Esophagus muscularis mucosa (tissue), 4 donors: ENCODE measurements at regions of chr1 and their contacts with region 1.

Region 1: GRCh38 chr1:24635195-24635843 is 7.8 kb upstream of the SRRM1 start:
- DNase-seq: no peak
- H3K4me3 ChIP-seq: no peak overlapping the region
- H3K27ac ChIP-seq: no peak overlapping the region
- H3K4me1 ChIP-seq: peaks cover 0 to 6% (median 1%) of the 10 kb centered on the region in 4 donors
- H3K27me3 ChIP-seq: peaks cover 0 to 10% (median 0%) of the 10 kb centered on the region in 4 donors
- CTCF ChIP-seq: peak; percentile 41 to 54 (median 45)
- EP300 ChIP-seq: no peak
- POLR2A ChIP-seq: no peak

Region 2: GRCh38 chr1:24201941-24202440 is 433.3 kb before region 1 on chr1:
- intact Hi-C with region 1: loop called (anchors 10 kb)
- DNase-seq: peak; percentile 97
- H3K4me3 ChIP-seq: no peak overlapping the region
- H3K27ac ChIP-seq: peak overlapping the region in 2 of 4 donors; percentile 10 to 52
- H3K4me1 ChIP-seq: peaks cover 3 to 9% (median 5%) of the 10 kb centered on the region in 4 donors
- H3K27me3 ChIP-seq: peaks cover 0 to 25% (median 0%) of the 10 kb centered on the region in 4 donors
- CTCF ChIP-seq: peak; percentile 71 to 74 (median 73)
- EP300 ChIP-seq: no peak
- POLR2A ChIP-seq: no peak

Region 3: GRCh38 chr1:24502709-24503058 is 132.6 kb before region 1 on chr1 and contains the start of gene RCAN3:
- intact Hi-C with region 1: loop called (anchors 10 kb)
- DNase-seq: no peak
- H3K4me3 ChIP-seq: peak within 1 kb of the TSS; percentile 62 to 91 (median 78)
- H3K27ac ChIP-seq: peak within 1 kb of the TSS; percentile 78 to 87 (median 82)
- H3K4me1 ChIP-seq: peaks cover 2 to 25% (median 18%) of the 10 kb centered on the region in 4 donors
- H3K27me3 ChIP-seq: no peaks in the 10 kb centered on the region
- CTCF ChIP-seq: no peak
- EP300 ChIP-seq: no peak
- POLR2A ChIP-seq: no peak
- total RNA-seq, gene RCAN3: 5.3 to 14.0 (median 9.3) TPM

Region 4: GRCh38 chr1:24609949-24610382 is 25.4 kb before region 1 on chr1:
- intact Hi-C with region 1: no loop called
- DNase-seq: no peak
- H3K4me3 ChIP-seq: no peak overlapping the region
- H3K27ac ChIP-seq: no peak overlapping the region
- H3K4me1 ChIP-seq: no peaks in the 10 kb centered on the region
- H3K27me3 ChIP-seq: peaks cover 0 to 16% (median 0%) of the 10 kb centered on the region in 4 donors
- CTCF ChIP-seq: no peak
- EP300 ChIP-seq: no peak
- POLR2A ChIP-seq: no peak